CD8-positive, alpha-beta T cell (primary cell): ENCODE measurements at regions of chr14 and their contacts with region 1.

Region 1: DNA sequence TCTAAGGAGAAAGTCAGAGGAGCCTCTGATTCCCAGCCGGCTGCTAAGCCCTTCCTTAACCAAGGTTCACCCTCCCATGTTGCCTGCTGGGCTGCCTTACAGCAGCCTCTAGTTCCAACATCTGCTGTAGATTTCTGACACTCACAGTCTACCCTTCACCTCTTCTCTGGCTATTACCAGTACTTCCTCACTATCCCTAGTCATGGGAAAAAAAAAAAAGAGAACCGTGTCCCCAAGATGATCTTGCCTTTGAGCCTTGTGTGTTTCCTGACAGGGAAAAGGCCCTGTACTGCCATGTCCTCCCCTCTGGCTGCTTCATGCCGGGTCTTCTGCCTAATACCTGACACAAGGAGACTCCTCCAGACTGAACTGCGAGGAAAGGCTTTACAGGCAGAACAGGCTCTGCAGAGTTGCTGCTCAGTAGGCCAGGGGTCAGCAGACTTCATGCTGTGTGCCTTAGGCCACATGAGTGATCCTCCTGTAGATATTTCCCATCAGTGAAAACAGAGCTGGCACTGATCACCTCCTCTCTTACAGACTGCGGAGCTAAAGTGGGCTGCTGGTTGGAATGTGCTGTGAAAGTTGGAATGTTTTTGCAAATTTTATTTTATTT is 46.8 kb downstream of the PRKCH start:
- DNase-seq: no peak
- ATAC-seq: no peak
- H3K4me3 ChIP-seq: no peak overlapping the region
- H3K4me3 Mint-ChIP-seq: peak overlapping the region; percentile 68
- H3K27ac ChIP-seq: peak overlapping the region in 1 of 2 experiments; percentile 68
- H3K27ac Mint-ChIP-seq: no peak overlapping the region
- H3K4me1 ChIP-seq: peaks cover 91% of the 10 kb centered on the region
- H3K4me1 Mint-ChIP-seq: peaks cover 33% of the 10 kb centered on the region
- H3K27me3 ChIP-seq: no peaks in the 10 kb centered on the region
- H3K27me3 Mint-ChIP-seq: no peaks in the 10 kb centered on the region
- CTCF ChIP-seq: no peak

Region 2: DNA sequence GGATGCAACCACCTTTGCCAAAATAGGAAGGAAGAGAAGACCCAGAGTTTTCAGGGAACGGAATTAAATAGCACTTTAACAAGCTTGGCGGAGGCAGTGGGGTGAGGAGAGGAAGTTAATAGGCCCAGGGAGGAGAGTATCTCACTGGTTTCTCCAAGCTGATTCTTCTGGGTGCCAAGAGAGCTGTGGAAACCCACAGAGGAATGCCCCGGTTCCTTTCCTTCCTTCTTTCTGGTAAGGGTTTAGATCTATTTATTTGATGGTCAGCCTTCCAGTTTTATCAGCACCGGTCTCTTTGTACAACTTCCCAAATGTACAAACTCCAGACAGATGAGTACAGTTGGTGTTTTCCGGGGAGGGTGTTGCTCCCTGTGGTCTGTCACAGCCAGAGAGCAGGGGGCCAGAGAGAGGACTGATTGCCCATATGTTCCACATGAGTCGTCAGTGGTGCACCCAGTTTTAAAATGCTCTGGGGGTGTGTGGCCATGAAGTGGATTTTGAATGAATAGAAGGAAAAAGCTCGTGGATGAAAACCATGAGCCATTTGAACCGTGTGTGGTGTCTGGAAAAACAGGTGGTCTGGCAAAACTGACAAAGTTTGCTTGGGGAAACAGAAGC is 20.3 kb before region 1 on chr14:
- CTCF ChIA-PET with region 1: interaction called, 6 read pairs
- POLR2A ChIA-PET with region 1: interaction called, 3 read pairs
- intact Hi-C with region 1: loop called in 1 of 2 experiments (anchors 2 kb)
- DNase-seq: peak in 2 of 9 experiments; percentile 46 to 62
- ATAC-seq: no peak
- H3K4me3 ChIP-seq: peak overlapping the region; percentile 21 to 25
- H3K4me3 Mint-ChIP-seq: peak overlapping the region; percentile 82
- H3K27ac ChIP-seq: peak overlapping the region; percentile 36 to 77
- H3K27ac Mint-ChIP-seq: peak overlapping the region; percentile 99
- H3K4me1 ChIP-seq: peaks cover 98% of the 10 kb centered on the region
- H3K4me1 Mint-ChIP-seq: peaks cover 98% of the 10 kb centered on the region
- H3K27me3 ChIP-seq: no peaks in the 10 kb centered on the region
- H3K27me3 Mint-ChIP-seq: no peaks in the 10 kb centered on the region
- CTCF ChIP-seq: no peak

Region 3: GRCh38 chr14:61355892-61356325 is 12.3 kb before region 1 on chr14:
- CTCF ChIA-PET with region 1: interaction called, 6 read pairs
- POLR2A ChIA-PET with region 1: interaction called, 5 read pairs
- intact Hi-C with region 1: loop called in 1 of 2 experiments (anchors 1 kb)
- DNase-seq: peak in 5 of 9 experiments; percentile 37 to 69 (median 67)
- ATAC-seq: peak; percentile 69
- H3K4me3 ChIP-seq: no peak overlapping the region
- H3K4me3 Mint-ChIP-seq: peak overlapping the region; percentile 63
- H3K27ac ChIP-seq: peak overlapping the region in 1 of 2 experiments; percentile 77
- H3K27ac Mint-ChIP-seq: peak overlapping the region; percentile 84
- H3K4me1 ChIP-seq: peaks cover 95% of the 10 kb centered on the region
- H3K4me1 Mint-ChIP-seq: peaks cover 91% of the 10 kb centered on the region
- H3K27me3 ChIP-seq: no peaks in the 10 kb centered on the region
- H3K27me3 Mint-ChIP-seq: no peaks in the 10 kb centered on the region
- CTCF ChIP-seq: no peak

Region 4: GRCh38 chr14:61381547-61381946 is 13.3 kb after region 1 on chr14:
- CTCF ChIA-PET with region 1: interaction called, 3 read pairs
- POLR2A ChIA-PET with region 1: interaction called, 5 read pairs
- intact Hi-C with region 1: loop called in 1 of 2 experiments (anchors 1 kb)
- DNase-seq: peak in 1 of 9 experiments; percentile 45
- ATAC-seq: no peak
- H3K4me3 ChIP-seq: peak overlapping the region in 1 of 2 experiments; percentile 6
- H3K4me3 Mint-ChIP-seq: peak overlapping the region; percentile 59
- H3K27ac ChIP-seq: peak overlapping the region in 1 of 2 experiments; percentile 90
- H3K27ac Mint-ChIP-seq: no peak overlapping the region
- H3K4me1 ChIP-seq: peaks cover 100% of the 10 kb centered on the region
- H3K4me1 Mint-ChIP-seq: no peaks in the 10 kb centered on the region
- H3K27me3 ChIP-seq: no peaks in the 10 kb centered on the region
- H3K27me3 Mint-ChIP-seq: no peaks in the 10 kb centered on the region
- CTCF ChIP-seq: no peak

Region 5: GRCh38 chr14:61403411-61403810 is 35.2 kb after region 1 on chr14:
- CTCF ChIA-PET with region 1: interaction called, 3 read pairs
- POLR2A ChIA-PET with region 1: interaction called, 3 read pairs
- intact Hi-C with region 1: loop called (anchors 1 to 5 kb)
- DNase-seq: peak in 3 of 9 experiments; percentile 35 to 79 (median 63)
- ATAC-seq: peak; percentile 77
- H3K4me3 ChIP-seq: peak overlapping the region in 1 of 2 experiments; percentile 10
- H3K4me3 Mint-ChIP-seq: peak overlapping the region; percentile 62
- H3K27ac ChIP-seq: peak overlapping the region; percentile 15 to 82
- H3K27ac Mint-ChIP-seq: peak overlapping the region; percentile 95
- H3K4me1 ChIP-seq: peaks cover 89% of the 10 kb centered on the region
- H3K4me1 Mint-ChIP-seq: peaks cover 31% of the 10 kb centered on the region
- H3K27me3 ChIP-seq: no peaks in the 10 kb centered on the region
- H3K27me3 Mint-ChIP-seq: no peaks in the 10 kb centered on the region
- CTCF ChIP-seq: no peak